Left ventricle myocardium inferior (tissue), 1 donor: ENCODE measurements at regions of chr9 and their contacts with region 1.

Region 1: DNA sequence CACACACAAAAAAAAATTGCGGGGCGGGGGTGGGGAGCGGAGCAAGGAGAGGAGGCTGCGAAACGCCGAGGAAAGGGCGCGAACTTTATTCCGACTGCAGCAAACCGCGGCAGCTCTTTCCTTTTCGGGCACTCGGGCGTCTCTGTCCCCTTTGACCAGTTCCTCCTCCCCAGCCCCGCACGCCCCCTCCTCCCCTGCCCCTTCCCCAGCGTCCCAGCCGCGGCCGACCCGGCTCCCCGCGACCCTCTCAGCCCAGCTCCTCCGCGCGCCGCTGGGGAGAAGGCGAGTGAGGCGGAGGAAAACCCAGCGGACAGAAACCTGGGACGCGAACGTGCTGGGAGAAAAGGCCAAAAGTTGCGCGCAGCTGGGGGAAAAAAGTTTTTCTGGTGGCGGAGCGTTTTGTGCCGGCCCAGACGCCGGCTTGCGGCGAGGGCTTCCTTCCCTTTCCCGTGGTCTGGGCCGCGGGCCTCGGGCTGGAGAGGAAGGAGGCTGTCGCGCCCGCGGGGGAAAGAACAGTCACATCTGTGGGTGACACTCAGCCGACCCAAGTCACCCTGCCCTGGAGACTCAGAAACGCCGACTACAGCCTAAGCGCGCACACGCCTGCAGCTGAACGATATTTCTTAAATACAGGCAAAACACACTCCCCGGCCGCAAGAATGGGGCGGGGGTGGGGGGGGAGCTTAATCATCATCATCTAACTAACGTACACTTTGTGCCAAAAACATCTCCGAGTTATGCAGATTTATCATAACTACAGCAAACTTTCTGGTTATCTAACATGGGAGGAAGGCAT is 1.1 kb upstream of the BNC2 start:
- DNase-seq: peak; percentile 60
- H3K4me3 ChIP-seq: peak overlapping the region; percentile 73
- H3K27ac ChIP-seq: peak overlapping the region; percentile 71
- H3K4me1 ChIP-seq: peaks cover 30% of the 10 kb centered on the region
- H3K27me3 ChIP-seq: peaks cover 77% of the 10 kb centered on the region
- CTCF ChIP-seq: no peak

Region 2: DNA sequence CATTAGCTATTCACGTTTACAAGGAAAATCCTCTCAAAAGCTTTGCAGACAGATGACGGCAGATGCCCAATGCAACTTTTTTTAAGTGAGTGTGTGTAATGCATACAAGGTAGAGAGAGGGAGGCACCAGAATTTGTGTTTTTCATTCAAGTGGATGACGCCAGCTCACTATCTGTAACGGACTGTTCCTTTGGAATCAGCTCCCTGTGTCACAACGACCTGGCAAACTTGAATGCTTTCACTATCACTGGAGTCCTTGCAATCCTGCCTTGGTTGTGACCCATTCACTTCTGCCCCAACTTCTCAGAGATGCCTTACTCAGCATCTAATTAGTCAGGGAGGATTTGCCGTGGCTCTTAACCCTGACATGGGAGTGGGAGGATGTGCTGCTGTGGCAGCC is 149.6 kb before region 1 on chr9:
- intact Hi-C with region 1: loop called (anchors 5 kb)
- DNase-seq: peak; percentile 22
- H3K4me3 ChIP-seq: no peak overlapping the region
- H3K27ac ChIP-seq: peak overlapping the region; percentile 63
- H3K4me1 ChIP-seq: peaks cover 9% of the 10 kb centered on the region
- H3K27me3 ChIP-seq: peaks cover 50% of the 10 kb centered on the region
- CTCF ChIP-seq: no peak